ENCODE measurements at regions of chr10 and their contacts with region 1.

Region 1: DNA sequence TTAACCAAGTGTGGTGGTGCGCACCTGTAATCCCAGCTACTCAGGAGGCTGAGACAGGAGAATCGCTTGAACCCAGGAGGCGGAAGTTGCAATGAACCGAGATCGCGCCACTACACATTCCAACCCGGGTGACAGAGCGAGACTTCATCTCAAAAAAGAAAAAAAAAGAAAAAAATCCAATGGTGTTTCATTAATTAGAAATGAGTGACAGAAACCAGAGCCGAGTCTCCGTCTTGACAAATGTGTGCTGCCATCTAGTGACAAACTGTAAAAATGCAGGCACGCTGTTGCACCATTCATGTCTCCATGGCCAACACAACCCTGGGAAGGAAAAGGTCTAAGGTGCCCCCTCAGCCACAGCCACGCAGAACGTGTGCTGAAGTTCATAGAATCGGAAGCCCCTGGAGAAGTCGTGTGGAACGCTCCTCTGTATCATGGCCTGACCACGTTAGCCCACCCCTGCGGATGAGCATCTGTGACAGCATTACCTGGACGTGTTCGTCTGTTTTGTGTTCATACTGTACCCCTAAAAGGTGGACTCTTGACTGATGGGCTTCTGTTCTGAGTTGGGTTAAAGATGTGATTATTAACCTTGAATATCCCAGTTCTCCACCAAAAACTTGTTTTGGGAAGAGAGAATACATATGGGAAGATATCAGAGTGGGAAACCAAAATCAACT is 94.9 kb downstream of the LYZL2 start:
- DNase-seq: peak; percentile 67
- ATAC-seq: peak; percentile 68
- H3K4me3 ChIP-seq: peak overlapping the region in 1 of 3 experiments; percentile 49; a peak in 1 of 6 replicates
- H3K27ac ChIP-seq: no peak overlapping the region
- H3K4me1 ChIP-seq: peaks cover 78% of the 10 kb centered on the region
- H3K27me3 ChIP-seq: no peaks in the 10 kb centered on the region; a peak in 1 of 5 replicates
- CTCF ChIP-seq: peak; percentile 89
- EP300 ChIP-seq: no peak
- POLR2A ChIP-seq: no peak
- RAD21 ChIP-seq: peak; percentile 77

Region 2: DNA sequence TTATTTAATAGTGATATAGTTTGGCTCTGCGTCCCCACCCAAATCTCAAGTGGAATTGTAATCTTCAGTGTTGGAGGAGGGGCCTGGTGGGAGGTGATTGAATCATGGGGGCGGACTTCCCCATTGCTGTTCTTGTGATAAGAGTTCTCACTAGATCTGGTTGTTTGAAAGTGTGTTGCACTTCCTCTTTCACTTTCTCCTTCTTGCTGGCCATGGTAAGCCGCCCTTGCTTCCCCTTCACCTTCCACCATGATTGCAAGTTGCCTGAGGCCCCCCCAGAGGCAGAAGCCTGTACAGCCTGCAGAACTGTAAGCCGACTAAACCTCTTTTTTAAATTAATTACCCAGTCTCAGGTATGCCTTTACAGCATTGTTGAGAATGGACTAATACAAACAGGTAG is 286.9 kb before region 1 on chr10:
- CTCF ChIA-PET with region 1: no interaction called
- POLR2A ChIA-PET with region 1: no interaction called
- in situ Hi-C with region 1: no loop called
- intact Hi-C with region 1: no loop called
- DNase-seq: no peak
- ATAC-seq: no peak
- H3K4me3 ChIP-seq: no peak overlapping the region
- H3K27ac ChIP-seq: no peak overlapping the region
- H3K4me1 ChIP-seq: no peaks in the 10 kb centered on the region
- H3K27me3 ChIP-seq: no peaks in the 10 kb centered on the region
- CTCF ChIP-seq: no peak
- EP300 ChIP-seq: no peak
- POLR2A ChIP-seq: no peak
- RAD21 ChIP-seq: no peak

Region 3: DNA sequence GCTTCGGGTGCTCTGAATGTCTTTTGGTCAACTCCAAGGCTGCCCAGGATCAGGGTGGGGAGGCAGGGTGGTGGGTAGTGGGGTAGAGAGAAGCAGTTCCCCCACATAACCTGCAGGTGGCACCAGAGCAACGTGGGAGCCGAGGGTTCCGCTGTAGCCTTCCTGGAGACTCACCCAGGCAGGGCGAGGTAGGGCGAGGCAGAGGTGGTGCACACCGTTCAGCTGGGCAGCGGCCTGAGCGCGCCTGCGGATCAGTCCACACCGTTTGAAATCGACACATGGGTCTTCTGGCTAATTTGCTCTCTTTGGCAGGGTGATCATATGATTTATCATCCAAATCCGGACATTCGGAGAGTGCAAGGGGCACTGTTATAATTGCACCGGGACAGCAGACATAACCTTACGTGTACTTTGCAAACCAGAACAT is 142.0 kb before region 1 on chr10:
- CTCF ChIA-PET with region 1: interaction called, 12 read pairs
- POLR2A ChIA-PET with region 1: no interaction called
- in situ Hi-C with region 1: no loop called
- intact Hi-C with region 1: loop called (anchors 5 kb)
- DNase-seq: peak; percentile 59
- ATAC-seq: peak; percentile 98
- H3K4me3 ChIP-seq: peak overlapping the region in 1 of 3 experiments; percentile 53; a peak in 2 of 6 replicates
- H3K27ac ChIP-seq: no peak overlapping the region
- H3K4me1 ChIP-seq: peaks cover 45% of the 10 kb centered on the region
- H3K27me3 ChIP-seq: peaks cover 0 to 15% of the 10 kb centered on the region in 2 experiments; a peak in 4 of 5 replicates
- CTCF ChIP-seq: peak; percentile 98
- EP300 ChIP-seq: 0 out of 4 replicates have a peak, but pooled peaks of 1 of the 2 experiments have one; percentile 10
- POLR2A ChIP-seq: no peak
- RAD21 ChIP-seq: peak; percentile 93

Region 4: DNA sequence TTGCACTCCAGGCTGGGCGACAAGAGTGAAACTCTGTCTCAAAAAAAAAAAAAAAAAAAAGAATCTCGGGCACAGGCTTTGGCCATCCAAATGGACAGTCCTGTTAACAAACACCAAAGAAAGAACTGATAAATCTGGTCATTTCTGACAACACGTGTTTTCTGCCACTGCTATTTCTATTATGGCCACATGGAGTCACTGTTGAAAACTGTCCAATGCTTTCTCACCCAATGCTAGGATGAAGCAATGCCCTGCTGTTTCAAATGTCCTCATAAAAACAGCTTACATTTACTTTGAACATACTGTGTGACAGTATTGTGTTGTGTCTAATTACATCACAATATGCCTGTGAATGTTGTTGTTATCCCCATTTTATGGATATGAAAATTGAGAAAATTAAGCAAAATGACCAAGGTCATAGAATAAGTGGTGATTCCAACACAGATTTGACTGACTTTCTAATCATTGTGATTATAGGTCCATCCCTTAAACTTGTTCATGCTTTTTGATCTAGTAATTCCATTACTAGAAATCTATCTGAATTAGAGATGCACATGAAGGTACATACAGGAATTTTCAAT is 120.5 kb before region 1 on chr10:
- CTCF ChIA-PET with region 1: interaction called, 16 read pairs
- POLR2A ChIA-PET with region 1: no interaction called
- in situ Hi-C with region 1: loop called (anchors 10 kb)
- intact Hi-C with region 1: loop called (anchors 1 kb)
- DNase-seq: peak; percentile 70
- ATAC-seq: peak; percentile 80
- H3K4me3 ChIP-seq: no peak overlapping the region
- H3K27ac ChIP-seq: no peak overlapping the region
- H3K4me1 ChIP-seq: peaks cover 29% of the 10 kb centered on the region
- H3K27me3 ChIP-seq: no peaks in the 10 kb centered on the region
- CTCF ChIP-seq: peak; percentile 85
- EP300 ChIP-seq: no peak
- POLR2A ChIP-seq: no peak
- RAD21 ChIP-seq: peak; percentile 78

Region 5: DNA sequence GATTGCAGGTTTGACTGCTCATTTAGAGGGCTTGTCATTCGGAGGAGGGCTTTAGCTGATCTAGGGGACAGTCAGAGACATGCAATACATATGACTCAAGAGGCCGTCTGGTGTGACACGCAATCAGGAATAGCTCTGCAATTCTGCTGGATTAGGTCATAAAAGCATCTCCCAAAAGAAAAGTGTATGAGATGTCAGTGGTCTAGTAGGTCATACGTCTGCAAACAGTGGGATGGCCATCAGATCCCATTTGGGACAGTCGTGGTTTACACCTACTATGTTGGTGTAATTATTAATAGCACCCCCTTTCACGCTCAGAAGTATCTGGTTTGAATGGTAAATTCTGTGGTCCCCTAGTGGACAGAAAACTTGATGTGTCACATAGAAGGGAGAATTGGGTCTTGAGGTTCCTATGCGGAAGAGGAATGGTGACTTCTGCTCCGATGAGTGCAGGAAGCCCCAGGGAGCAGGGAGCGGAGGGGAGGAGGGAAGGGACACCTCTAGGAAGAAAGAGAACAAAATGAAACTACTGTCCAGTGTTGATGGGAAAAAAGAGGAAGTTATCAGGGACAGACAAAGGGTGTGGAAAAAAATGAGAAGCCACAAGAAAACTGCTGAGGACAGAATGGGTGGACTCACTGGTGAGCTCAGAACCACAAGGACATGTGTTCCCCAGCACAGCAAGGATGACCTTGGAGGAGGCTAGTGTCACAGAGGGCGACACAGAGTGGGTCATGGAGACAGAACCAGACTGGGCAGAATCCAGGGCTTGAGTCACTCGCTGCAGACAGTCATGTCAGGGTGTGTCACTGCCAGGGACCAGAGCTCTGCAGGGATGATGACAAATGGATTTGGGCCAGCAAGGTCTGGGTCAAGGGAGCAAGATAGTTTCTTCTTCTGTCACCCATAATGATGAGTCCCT is 40.7 kb before region 1 on chr10:
- CTCF ChIA-PET with region 1: no interaction called
- POLR2A ChIA-PET with region 1: no interaction called
- in situ Hi-C with region 1: no loop called
- intact Hi-C with region 1: no loop called
- DNase-seq: peak; percentile 60
- ATAC-seq: peak; percentile 67
- H3K4me3 ChIP-seq: peak overlapping the region in 1 of 3 experiments; percentile 19; a peak in 1 of 6 replicates
- H3K27ac ChIP-seq: no peak overlapping the region
- H3K4me1 ChIP-seq: peaks cover 44% of the 10 kb centered on the region
- H3K27me3 ChIP-seq: 0 out of 5 replicates have a peak, but pooled peaks cover 0 to 3% of the 10 kb centered on the region in 2 experiments
- CTCF ChIP-seq: 0 out of 2 replicates have a peak, but pooled peaks have one; percentile 22
- EP300 ChIP-seq: no peak
- POLR2A ChIP-seq: no peak
- RAD21 ChIP-seq: no peak